ENCODE measurements at regions of chr10 and their contacts with region 1.

Region 1: DNA sequence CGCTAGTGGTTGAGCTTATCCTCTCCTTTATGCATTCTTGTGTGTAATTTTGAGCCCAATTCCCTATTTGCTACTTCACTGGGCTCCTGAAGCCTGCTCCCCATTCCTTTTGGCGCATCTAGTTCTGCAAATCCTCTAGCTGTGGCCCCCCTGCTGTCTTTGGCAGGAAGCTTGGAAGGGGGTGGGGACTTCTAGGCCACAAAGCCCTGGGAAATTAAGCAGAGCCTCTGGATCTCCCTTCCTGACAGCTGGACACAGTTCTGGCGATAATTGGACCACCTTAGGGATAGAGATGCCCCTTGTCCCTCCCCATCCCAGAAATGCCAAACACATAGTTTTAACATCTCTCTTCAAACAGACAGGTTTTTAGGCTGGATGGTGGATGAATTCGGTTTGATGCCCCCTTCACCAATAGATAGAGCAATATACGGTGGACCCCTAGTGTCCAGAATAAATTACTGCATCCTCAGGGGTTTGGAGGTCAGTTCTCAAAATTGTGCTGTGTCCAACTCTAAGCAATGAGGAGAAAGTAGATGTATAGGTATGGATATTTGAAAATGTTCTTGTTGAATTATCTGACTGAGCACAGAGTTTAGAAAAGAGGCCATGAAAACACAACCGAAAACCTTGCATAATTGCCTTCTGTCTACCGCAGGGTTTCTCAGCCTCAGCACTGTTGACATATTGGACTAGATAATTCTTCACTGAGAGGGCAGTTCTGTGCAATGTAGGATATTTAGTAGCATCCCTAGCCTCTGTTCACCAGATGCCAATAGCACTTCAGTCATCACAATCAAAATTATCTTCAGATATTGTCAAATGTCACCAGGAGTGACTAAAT is 75.5 kb downstream of the PAPSS2 start:
- DNase-seq: peak; percentile 77
- ATAC-seq: peak; percentile 96
- H3K4me3 Mint-ChIP-seq: peak overlapping the region; percentile 53
- H3K27ac Mint-ChIP-seq: peak overlapping the region; percentile 69
- H3K4me1 Mint-ChIP-seq: peaks cover 18% of the 10 kb centered on the region
- H3K27me3 Mint-ChIP-seq: no peaks in the 10 kb centered on the region
- CTCF ChIP-seq: peak; percentile 82

Region 2: GRCh38 chr10:87531908-87532622 is 203.1 kb before region 1 on chr10:
- CTCF ChIA-PET with region 1: interaction called, 11 read pairs
- POLR2A ChIA-PET with region 1: no interaction called
- DNase-seq: no peak
- ATAC-seq: no peak
- H3K4me3 Mint-ChIP-seq: no peak overlapping the region
- H3K27ac Mint-ChIP-seq: peak overlapping the region; percentile 25; the same call in 1 of the 2 replicates
- H3K4me1 Mint-ChIP-seq: peaks cover 4% of the 10 kb centered on the region; the same call in 1 of the 2 replicates
- H3K27me3 Mint-ChIP-seq: no peaks in the 10 kb centered on the region
- CTCF ChIP-seq: no peak

Region 3: GRCh38 chr10:87613751-87614150 is 121.5 kb before region 1 on chr10:
- CTCF ChIA-PET with region 1: no interaction called
- POLR2A ChIA-PET with region 1: no interaction called
- DNase-seq: no peak
- ATAC-seq: no peak
- H3K4me3 Mint-ChIP-seq: no peak overlapping the region
- H3K27ac Mint-ChIP-seq: no peak overlapping the region
- H3K4me1 Mint-ChIP-seq: peaks cover 25% of the 10 kb centered on the region
- H3K27me3 Mint-ChIP-seq: no peaks in the 10 kb centered on the region
- CTCF ChIP-seq: no peak

Region 4: GRCh38 chr10:87659571-87660483 is 75.4 kb before region 1 on chr10 and contains the start of gene PAPSS2:
- CTCF ChIA-PET with region 1: interaction called, 15 read pairs
- POLR2A ChIA-PET with region 1: no interaction called
- DNase-seq: peak; percentile 71
- ATAC-seq: peak; percentile 64
- H3K4me3 Mint-ChIP-seq: peak within 1 kb of the TSS; percentile 95
- H3K27ac Mint-ChIP-seq: peak within 1 kb of the TSS; percentile 92
- H3K4me1 Mint-ChIP-seq: peaks cover 62% of the 10 kb centered on the region
- H3K27me3 Mint-ChIP-seq: no peaks in the 10 kb centered on the region
- CTCF ChIP-seq: no peak
- total RNA-seq, gene PAPSS2: 22.1 to 30.4 TPM (median 29.7 TPM) in 3 replicates

Region 5: DNA sequence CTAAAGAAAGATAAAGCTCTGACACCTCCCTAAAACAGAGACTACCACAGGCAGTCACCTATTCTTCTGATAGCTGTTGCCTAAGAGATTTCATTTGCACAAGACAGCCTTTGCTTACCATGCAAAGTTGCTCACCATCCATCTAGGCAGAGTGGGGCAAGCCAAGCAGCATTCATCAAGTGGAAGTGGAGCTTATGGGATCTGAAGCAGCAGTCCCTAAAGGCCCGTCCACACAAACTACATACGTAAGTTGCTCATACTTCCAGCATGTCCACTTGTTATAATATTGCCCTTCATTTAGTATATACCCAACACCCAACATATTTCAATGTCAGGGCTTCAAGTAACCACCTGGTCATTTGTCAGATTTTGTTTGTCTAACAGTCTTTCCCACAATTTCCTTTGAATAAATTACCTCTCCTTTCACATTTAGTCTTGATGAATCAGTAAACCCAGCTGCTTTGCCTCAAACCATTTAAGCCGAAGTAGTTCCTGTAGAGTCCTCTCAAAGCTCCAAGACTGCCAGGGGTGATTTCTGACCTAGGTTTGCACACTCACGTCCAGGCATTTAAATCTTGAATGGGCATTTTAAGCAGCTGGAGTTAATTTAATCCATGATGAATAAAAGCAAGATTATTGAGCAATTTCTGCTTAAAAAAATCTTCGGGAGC is 14.9 kb after region 1 on chr10:
- CTCF ChIA-PET with region 1: interaction called, 24 read pairs
- POLR2A ChIA-PET with region 1: no interaction called
- DNase-seq: no peak
- ATAC-seq: peak; percentile 68
- H3K4me3 Mint-ChIP-seq: no peak overlapping the region
- H3K27ac Mint-ChIP-seq: peak overlapping the region; percentile 21
- H3K4me1 Mint-ChIP-seq: peaks cover 22% of the 10 kb centered on the region
- H3K27me3 Mint-ChIP-seq: no peaks in the 10 kb centered on the region
- CTCF ChIP-seq: no peak

Region 6: GRCh38 chr10:87790185-87790584 is 55.0 kb after region 1 on chr10:
- CTCF ChIA-PET with region 1: no interaction called
- POLR2A ChIA-PET with region 1: no interaction called
- DNase-seq: no peak
- ATAC-seq: no peak
- H3K4me3 Mint-ChIP-seq: no peak overlapping the region
- H3K27ac Mint-ChIP-seq: no peak overlapping the region
- H3K4me1 Mint-ChIP-seq: peaks cover 11% of the 10 kb centered on the region
- H3K27me3 Mint-ChIP-seq: no peaks in the 10 kb centered on the region
- CTCF ChIP-seq: no peak

Region 7: DNA sequence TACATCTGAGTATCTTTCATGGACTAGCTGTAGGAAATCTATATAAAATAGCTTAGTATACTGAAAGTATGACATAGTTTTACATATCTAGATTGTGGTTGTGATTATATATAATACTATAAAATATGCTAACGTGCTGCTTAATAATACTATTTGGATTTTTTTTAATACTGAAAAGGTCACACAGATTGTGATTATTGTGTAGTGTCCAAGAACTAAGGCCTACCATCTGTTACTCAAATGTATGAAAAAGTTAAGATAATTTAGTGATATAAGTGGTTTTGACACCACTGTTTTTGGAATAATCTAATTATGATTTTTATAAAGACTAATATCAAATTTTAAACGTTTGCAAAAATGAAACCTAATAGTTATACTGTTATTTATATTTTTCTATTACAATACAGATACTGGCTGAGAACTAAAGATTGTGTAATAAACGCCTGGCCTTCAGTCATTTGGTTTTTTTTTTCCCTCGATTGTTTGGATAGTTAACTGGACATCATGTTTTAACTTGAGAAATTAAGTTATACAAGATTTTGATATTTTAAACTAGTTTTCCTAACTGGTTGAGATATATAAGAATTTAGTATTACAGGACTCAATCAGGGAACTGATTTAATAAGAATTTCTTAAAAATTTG is 140.8 kb after region 1 on chr10:
- CTCF ChIA-PET with region 1: no interaction called
- POLR2A ChIA-PET with region 1: no interaction called
- DNase-seq: no peak
- ATAC-seq: no peak
- H3K4me3 Mint-ChIP-seq: no peak overlapping the region
- H3K27ac Mint-ChIP-seq: no peak overlapping the region
- H3K4me1 Mint-ChIP-seq: peaks cover 34% of the 10 kb centered on the region
- H3K27me3 Mint-ChIP-seq: no peaks in the 10 kb centered on the region
- CTCF ChIP-seq: no peak

Measured in WTC11 (cell line).